H1 (cell line): ENCODE measurements at regions of chr19 and their contacts with region 1.

Region 1: GRCh38 chr19:13155472-13156359 is 5.5 kb downstream of the IER2 start:
- DNase-seq: peak in 1 of 2 experiments; percentile 89
- H3K4me3 ChIP-seq: peak overlapping the region; percentile 90 to 99 (median 92)
- H3K27ac ChIP-seq: peak overlapping the region; percentile 85
- H3K4me1 ChIP-seq: peaks cover 0 to 8% (median 6%) of the 10 kb centered on the region in 4 experiments; a peak in 6 of 7 replicates
- H3K27me3 ChIP-seq: no peaks in the 10 kb centered on the region; a peak in 1 of 7 replicates
- CTCF ChIP-seq: no peak
- EP300 ChIP-seq: 0 out of 3 replicates have a peak, but pooled peaks of 1 of the 2 experiments have one; percentile 18
- POLR2A ChIP-seq: peak; percentile 12 to 63
- RAD21 ChIP-seq: no peak; a peak in 1 of 4 replicates

Region 2: DNA sequence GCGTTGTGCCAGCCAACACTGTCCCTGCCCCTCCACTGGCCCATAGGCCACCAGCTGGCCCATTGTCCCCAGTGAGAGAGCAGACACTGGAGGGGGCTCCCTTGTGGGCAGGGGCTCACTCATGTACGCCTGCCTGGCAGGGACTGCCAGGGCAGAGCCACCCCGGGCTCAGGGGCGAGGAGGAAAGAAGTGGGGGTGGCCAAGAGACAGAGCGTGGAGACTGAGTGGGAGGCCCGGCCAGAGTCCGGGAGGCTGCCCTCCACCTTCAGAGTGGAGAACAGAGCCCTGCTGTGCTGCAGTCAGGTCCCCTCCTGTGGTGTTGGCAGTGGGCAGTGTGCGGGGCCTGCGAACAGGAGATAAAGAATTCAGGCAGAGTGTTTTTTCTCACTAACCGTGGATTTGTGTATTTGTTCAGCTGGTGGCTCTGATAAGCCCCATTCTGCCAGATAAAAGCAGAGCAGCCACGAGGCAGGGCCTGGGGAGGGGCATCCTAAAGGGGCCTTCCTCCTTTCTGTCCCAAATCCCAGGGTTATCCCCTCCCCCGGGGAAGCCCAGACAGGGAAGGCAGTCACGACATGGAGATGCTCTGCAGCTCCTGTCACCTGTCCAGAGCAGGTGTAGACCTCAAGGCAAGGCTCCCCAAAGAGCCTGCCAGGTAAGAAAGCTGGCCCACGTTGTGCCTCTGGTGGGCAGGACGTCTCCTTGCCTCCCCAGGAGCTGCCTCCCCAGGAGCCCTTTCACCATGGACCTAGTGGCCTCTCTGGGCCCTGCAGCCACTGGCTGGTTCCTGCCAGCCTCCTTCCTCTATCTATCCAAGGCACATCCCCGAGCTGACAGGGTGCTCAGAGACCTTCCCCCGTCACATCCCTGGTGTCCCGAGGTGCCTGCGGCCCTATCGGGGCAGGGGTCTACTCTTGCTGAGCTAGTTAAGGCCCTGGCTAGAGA is 86.0 kb before region 1 on chr19:
- CTCF ChIA-PET with region 1: no interaction called
- POLR2A ChIA-PET with region 1: no interaction called
- DNase-seq: no peak
- H3K4me3 ChIP-seq: no peak overlapping the region
- H3K27ac ChIP-seq: no peak overlapping the region
- H3K4me1 ChIP-seq: no peaks in the 10 kb centered on the region; a peak in 1 of 7 replicates
- H3K27me3 ChIP-seq: peaks cover 0 to 5% (median 2%) of the 10 kb centered on the region in 4 experiments; a peak in 3 of 7 replicates
- CTCF ChIP-seq: no peak
- EP300 ChIP-seq: no peak
- POLR2A ChIP-seq: no peak
- RAD21 ChIP-seq: no peak

Region 3: GRCh38 chr19:13172068-13172896 is 16.6 kb after region 1 on chr19:
- CTCF ChIA-PET with region 1: interaction called, 6 read pairs
- POLR2A ChIA-PET with region 1: interaction called, 530 read pairs
- DNase-seq: no peak
- H3K4me3 ChIP-seq: no peak overlapping the region
- H3K27ac ChIP-seq: no peak overlapping the region
- H3K4me1 ChIP-seq: peaks cover under 1 to 5% (median 4%) of the 10 kb centered on the region in 4 experiments; a peak in 5 of 7 replicates
- H3K27me3 ChIP-seq: no peaks in the 10 kb centered on the region
- CTCF ChIP-seq: no peak
- EP300 ChIP-seq: no peak
- POLR2A ChIP-seq: no peak
- RAD21 ChIP-seq: no peak

Region 4: DNA sequence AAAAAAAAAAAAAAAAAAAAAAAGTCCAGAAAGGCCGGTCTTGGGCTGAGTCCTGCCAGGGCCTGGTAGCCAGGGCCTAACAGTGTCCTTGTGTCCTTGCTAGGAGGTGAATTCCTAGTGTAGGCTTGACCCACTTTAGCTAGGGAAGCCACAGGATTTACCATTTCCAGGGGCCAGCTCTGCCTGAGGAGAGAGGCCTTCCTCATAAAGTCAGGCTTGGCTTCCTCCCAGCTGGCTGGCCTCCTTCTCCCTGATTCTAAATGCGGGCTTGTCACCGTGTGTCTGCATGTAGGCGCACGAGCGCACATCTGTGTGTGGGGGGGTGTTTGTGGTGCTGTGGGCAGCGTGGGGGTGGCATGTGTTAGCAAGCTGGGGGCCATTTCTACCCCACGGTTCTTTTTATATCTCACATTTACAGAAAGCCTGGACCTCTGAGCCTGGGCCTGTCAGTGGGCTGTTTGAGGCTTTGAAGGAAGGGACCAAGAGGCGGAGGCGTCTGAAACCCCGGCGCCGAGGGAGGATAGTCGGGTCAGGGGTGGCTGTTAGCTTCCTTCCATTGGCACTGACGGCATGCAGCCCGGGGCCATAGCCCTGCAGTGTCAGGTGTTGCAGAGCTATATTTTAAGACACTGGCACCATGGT is 26.2 kb after region 1 on chr19:
- CTCF ChIA-PET with region 1: interaction called, 3 read pairs
- POLR2A ChIA-PET with region 1: interaction called, 41 read pairs
- DNase-seq: no peak
- H3K4me3 ChIP-seq: no peak overlapping the region
- H3K27ac ChIP-seq: no peak overlapping the region
- H3K4me1 ChIP-seq: peaks cover 0 to 2% (median 1%) of the 10 kb centered on the region in 4 experiments; a peak in 2 of 7 replicates
- H3K27me3 ChIP-seq: no peaks in the 10 kb centered on the region
- CTCF ChIP-seq: no peak
- EP300 ChIP-seq: no peak
- POLR2A ChIP-seq: no peak
- RAD21 ChIP-seq: no peak

Region 5: GRCh38 chr19:13212759-13213330 is 57.1 kb after region 1 on chr19:
- CTCF ChIA-PET with region 1: no interaction called
- POLR2A ChIA-PET with region 1: interaction called, 16 read pairs
- DNase-seq: peak in 1 of 2 experiments; percentile 86
- H3K4me3 ChIP-seq: no peak overlapping the region
- H3K27ac ChIP-seq: no peak overlapping the region
- H3K4me1 ChIP-seq: peaks cover 0 to 10% (median 3%) of the 10 kb centered on the region in 4 experiments; a peak in 3 of 7 replicates
- H3K27me3 ChIP-seq: no peaks in the 10 kb centered on the region
- CTCF ChIP-seq: peak; percentile 69 to 88 (median 80)
- EP300 ChIP-seq: no peak
- POLR2A ChIP-seq: no peak
- RAD21 ChIP-seq: peak; percentile 50 to 61